H1 (cell line): ENCODE measurements at regions of chr10 and their contacts with region 1.

Region 1: GRCh38 chr10:43078987-43079275 is 2.1 kb downstream of the RET start:
- DNase-seq: peak; percentile 33 to 91
- H3K4me3 ChIP-seq: no peak overlapping the region
- H3K27ac ChIP-seq: no peak overlapping the region
- H3K4me1 ChIP-seq: peaks cover 0 to 10% (median 3%) of the 10 kb centered on the region in 4 experiments; a peak in 3 of 7 replicates
- H3K27me3 ChIP-seq: peaks cover 12 to 37% (median 30%) of the 10 kb centered on the region in 4 experiments
- CTCF ChIP-seq: peak; percentile 90 to 95 (median 92)
- EP300 ChIP-seq: no peak
- POLR2A ChIP-seq: no peak
- RAD21 ChIP-seq: peak; percentile 88 to 93

Region 2: GRCh38 chr10:42866115-42866995 is 212.6 kb before region 1 on chr10:
- CTCF ChIA-PET with region 1: interaction called, 97 read pairs
- POLR2A ChIA-PET with region 1: interaction called, 5 read pairs
- DNase-seq: peak; percentile 59 to 90
- H3K4me3 ChIP-seq: peak overlapping the region; percentile 8 to 48 (median 16); a peak in 5 of 8 replicates
- H3K27ac ChIP-seq: no peak overlapping the region
- H3K4me1 ChIP-seq: peaks cover 0 to 2% (median under 1%) of the 10 kb centered on the region in 4 experiments; a peak in 2 of 7 replicates
- H3K27me3 ChIP-seq: peaks cover 0 to 17% (median 12%) of the 10 kb centered on the region in 4 experiments; a peak in 4 of 7 replicates
- CTCF ChIP-seq: peak; percentile 75 to 91 (median 78)
- EP300 ChIP-seq: no peak
- POLR2A ChIP-seq: no peak
- RAD21 ChIP-seq: peak; percentile 92 to 94

Region 3: GRCh38 chr10:42926843-42927242 is 152.1 kb before region 1 on chr10:
- CTCF ChIA-PET with region 1: interaction called, 11 read pairs
- POLR2A ChIA-PET with region 1: no interaction called
- DNase-seq: peak in 1 of 2 experiments; percentile 60
- H3K4me3 ChIP-seq: no peak overlapping the region
- H3K27ac ChIP-seq: no peak overlapping the region
- H3K4me1 ChIP-seq: peaks cover 0 to 14% (median 6%) of the 10 kb centered on the region in 4 experiments; a peak in 5 of 7 replicates
- H3K27me3 ChIP-seq: peaks cover 0 to 3% (median 0%) of the 10 kb centered on the region in 4 experiments; a peak in 3 of 7 replicates
- CTCF ChIP-seq: no peak
- EP300 ChIP-seq: no peak
- POLR2A ChIP-seq: no peak
- RAD21 ChIP-seq: no peak

Region 4: GRCh38 chr10:42940487-42941294 is 138.2 kb before region 1 on chr10:
- CTCF ChIA-PET with region 1: interaction called, 17 read pairs
- POLR2A ChIA-PET with region 1: no interaction called
- DNase-seq: peak in 1 of 2 experiments; percentile 29
- H3K4me3 ChIP-seq: no peak overlapping the region
- H3K27ac ChIP-seq: no peak overlapping the region
- H3K4me1 ChIP-seq: no peaks in the 10 kb centered on the region; a peak in 1 of 7 replicates
- H3K27me3 ChIP-seq: no peaks in the 10 kb centered on the region; a peak in 2 of 7 replicates
- CTCF ChIP-seq: no peak
- EP300 ChIP-seq: no peak
- POLR2A ChIP-seq: no peak
- RAD21 ChIP-seq: no peak

Region 5: GRCh38 chr10:43039624-43040481 is 39.1 kb before region 1 on chr10:
- CTCF ChIA-PET with region 1: interaction called, 22 read pairs
- POLR2A ChIA-PET with region 1: no interaction called
- DNase-seq: peak in 1 of 2 experiments; percentile 39
- H3K4me3 ChIP-seq: no peak overlapping the region
- H3K27ac ChIP-seq: no peak overlapping the region
- H3K4me1 ChIP-seq: peaks cover 0 to 22% (median 9%) of the 10 kb centered on the region in 4 experiments; a peak in 6 of 7 replicates
- H3K27me3 ChIP-seq: no peaks in the 10 kb centered on the region
- CTCF ChIP-seq: no peak
- EP300 ChIP-seq: no peak
- POLR2A ChIP-seq: no peak
- RAD21 ChIP-seq: no peak

Region 6: DNA sequence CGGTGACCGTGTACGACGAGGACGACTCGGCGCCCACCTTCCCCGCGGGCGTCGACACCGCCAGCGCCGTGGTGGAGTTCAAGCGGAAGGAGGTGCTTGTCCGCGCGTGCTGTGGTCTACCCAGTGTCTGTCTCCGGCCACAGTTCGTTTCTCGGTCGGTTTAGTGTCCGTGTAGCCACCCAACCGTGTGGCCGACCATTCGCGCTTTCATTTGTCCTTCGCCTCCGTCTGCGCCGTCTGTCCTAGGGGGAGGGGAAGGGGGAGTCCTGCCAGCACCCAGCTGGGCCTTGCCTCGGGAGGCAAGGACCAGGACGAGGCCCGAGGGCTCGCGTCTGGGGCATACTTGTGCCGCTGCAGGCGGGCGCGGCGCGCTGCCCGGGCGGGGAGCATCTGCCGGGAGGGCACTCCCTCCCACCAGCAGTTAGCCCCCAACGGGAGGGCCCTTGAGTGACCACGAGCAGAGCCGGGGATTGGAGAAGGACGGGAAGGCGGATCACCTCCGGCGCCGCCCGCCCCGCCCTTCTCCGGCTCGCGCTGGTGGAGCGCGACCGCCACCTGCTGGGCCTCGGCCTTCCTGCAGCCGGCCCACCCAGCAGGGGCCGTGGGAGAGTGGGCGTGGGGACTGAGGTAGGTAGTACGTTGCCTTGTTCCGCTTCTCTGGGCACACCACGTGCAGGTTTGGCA is 26.3 kb after region 1 on chr10:
- CTCF ChIA-PET with region 1: interaction called, 19 read pairs
- POLR2A ChIA-PET with region 1: interaction called, 4 read pairs
- DNase-seq: peak; percentile 75 to 94
- H3K4me3 ChIP-seq: peak overlapping the region; percentile 17 to 64 (median 58)
- H3K27ac ChIP-seq: no peak overlapping the region
- H3K4me1 ChIP-seq: peaks cover 0 to 13% (median 3%) of the 10 kb centered on the region in 4 experiments; a peak in 5 of 7 replicates
- H3K27me3 ChIP-seq: peaks cover 0 to 16% (median 12%) of the 10 kb centered on the region in 4 experiments; a peak in 6 of 7 replicates
- CTCF ChIP-seq: peak in 2 of 3 experiments; percentile 92 to 93; a peak in 3 of 4 replicates
- EP300 ChIP-seq: 0 out of 3 replicates have a peak, but pooled peaks of 1 of the 2 experiments have one; percentile 6
- POLR2A ChIP-seq: 0 out of 3 replicates have a peak, but pooled peaks of 1 of the 2 experiments have one; percentile 34
- RAD21 ChIP-seq: peak; percentile 96 to 98